MCF 10A (cell line): ENCODE measurements at regions of chr2 and their contacts with region 1.

Region 1: DNA sequence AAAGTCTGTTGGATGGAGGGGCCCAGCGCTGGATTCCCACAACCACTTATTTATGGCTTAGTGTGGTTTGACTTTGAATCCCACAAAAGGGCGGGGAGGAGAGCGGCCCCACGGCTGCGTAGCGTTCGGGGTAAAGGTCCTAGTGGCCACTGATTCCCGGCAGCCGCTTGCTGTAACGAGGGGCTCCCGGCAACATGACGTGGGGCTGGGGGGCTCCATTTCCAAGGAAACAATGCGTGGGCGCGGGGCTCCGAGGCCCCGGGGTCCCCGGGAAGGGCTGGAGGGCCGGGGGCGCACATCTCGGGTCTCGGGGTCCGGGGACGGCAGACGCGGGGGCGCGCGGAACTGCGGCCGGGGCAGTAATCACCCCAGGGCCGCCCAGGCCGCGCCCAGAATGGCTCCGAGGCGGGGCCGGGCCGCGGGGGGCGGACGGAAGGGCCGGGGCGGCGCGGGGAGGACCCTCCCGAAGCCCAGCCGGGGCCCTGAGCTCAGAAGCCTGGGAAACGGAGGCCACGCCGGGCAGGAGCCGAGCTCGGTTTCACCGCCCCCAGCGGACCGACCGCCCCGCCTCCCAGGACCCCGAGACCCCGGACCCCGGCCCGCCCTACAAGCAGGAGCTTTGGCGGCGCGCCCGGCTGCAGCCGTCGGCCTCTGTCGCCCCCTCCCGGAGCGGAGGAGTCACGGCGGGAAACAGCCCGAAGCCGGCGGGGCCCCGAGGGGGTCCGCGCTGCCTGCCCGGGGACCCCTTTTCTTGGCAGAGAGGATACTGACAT is 11.9 kb upstream of the MLPH start:
- DNase-seq: peak; percentile 65
- H3K4me3 Mint-ChIP-seq: peak overlapping the region; percentile 79
- H3K27ac Mint-ChIP-seq: peak overlapping the region; percentile 94
- H3K4me1 Mint-ChIP-seq: peaks cover 9% of the 10 kb centered on the region
- H3K27me3 Mint-ChIP-seq: no peaks in the 10 kb centered on the region
- CTCF ChIP-seq: peak; percentile 92

Region 2: DNA sequence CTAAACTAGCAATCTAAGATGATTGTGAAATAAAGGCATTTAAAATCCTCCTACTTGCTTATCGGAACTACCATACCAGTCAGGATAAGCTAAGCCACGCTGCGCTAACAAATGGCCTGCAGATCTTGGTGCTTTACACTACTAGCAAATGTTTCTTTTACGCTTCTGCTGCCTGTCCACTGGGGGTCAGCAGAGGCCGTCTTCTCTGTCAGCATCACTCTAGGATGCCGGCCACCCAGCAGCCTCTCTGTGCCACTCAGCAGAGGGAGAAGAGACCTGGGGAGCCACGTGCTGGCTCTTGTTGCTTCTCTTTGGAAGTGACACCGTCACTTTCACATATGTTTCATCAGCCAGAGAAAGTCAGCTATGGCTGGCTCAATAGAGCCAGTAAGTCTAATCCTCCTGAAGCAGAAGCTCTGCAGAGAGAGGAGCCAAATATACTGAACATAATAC is 352.9 kb before region 1 on chr2:
- CTCF ChIA-PET with region 1: interaction called, 13 read pairs
- POLR2A ChIA-PET with region 1: interaction called, 4 read pairs
- intact Hi-C with region 1: no loop called
- DNase-seq: peak; percentile 82
- H3K4me3 Mint-ChIP-seq: no peak overlapping the region
- H3K27ac Mint-ChIP-seq: peak overlapping the region; percentile 82
- H3K4me1 Mint-ChIP-seq: peaks cover 25% of the 10 kb centered on the region
- H3K27me3 Mint-ChIP-seq: no peaks in the 10 kb centered on the region
- CTCF ChIP-seq: peak; percentile 80

Region 3: GRCh38 chr2:237171396-237171795 is 303.7 kb before region 1 on chr2:
- CTCF ChIA-PET with region 1: interaction called, 3 read pairs
- POLR2A ChIA-PET with region 1: no interaction called
- intact Hi-C with region 1: loop called (anchors 1 kb)
- DNase-seq: peak; percentile 88
- H3K4me3 Mint-ChIP-seq: no peak overlapping the region
- H3K27ac Mint-ChIP-seq: peak overlapping the region; percentile 84
- H3K4me1 Mint-ChIP-seq: peaks cover 14% of the 10 kb centered on the region
- H3K27me3 Mint-ChIP-seq: no peaks in the 10 kb centered on the region
- CTCF ChIP-seq: peak; percentile 38

Region 4: DNA sequence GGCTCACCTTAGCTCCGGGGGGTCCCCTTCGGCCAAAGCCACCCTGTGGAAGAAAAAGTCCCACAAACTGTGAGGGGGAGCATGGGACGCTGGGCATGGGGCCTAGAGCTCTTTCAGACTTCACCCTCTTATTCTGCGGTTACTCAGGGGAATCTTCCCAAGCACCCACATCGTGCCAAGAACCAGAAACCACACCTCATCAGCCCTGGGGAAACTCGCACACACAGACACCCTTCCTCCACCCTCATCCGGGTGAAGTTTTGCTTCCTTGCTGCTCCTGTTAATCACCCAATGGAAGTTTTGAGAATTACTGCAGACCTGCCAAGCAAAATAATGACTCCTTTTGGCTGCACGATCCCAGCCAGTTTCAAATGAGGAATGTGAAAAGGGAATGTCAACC is 120.2 kb before region 1 on chr2:
- CTCF ChIA-PET with region 1: no interaction called
- POLR2A ChIA-PET with region 1: no interaction called
- intact Hi-C with region 1: no loop called
- DNase-seq: peak; percentile 97
- H3K4me3 Mint-ChIP-seq: peak overlapping the region; percentile 17
- H3K27ac Mint-ChIP-seq: peak overlapping the region; percentile 74
- H3K4me1 Mint-ChIP-seq: peaks cover 18% of the 10 kb centered on the region
- H3K27me3 Mint-ChIP-seq: peaks cover 9% of the 10 kb centered on the region
- CTCF ChIP-seq: peak; percentile 16

Region 5: GRCh38 chr2:237421542-237422116 is 53.5 kb before region 1 on chr2:
- CTCF ChIA-PET with region 1: interaction called, 21 read pairs
- POLR2A ChIA-PET with region 1: interaction called, 7 read pairs
- intact Hi-C with region 1: loop called (anchors 1 kb)
- DNase-seq: peak; percentile 84
- H3K4me3 Mint-ChIP-seq: peak overlapping the region; percentile 35
- H3K27ac Mint-ChIP-seq: peak overlapping the region; percentile 13
- H3K4me1 Mint-ChIP-seq: peaks cover 19% of the 10 kb centered on the region
- H3K27me3 Mint-ChIP-seq: no peaks in the 10 kb centered on the region
- CTCF ChIP-seq: peak; percentile 76

Region 6: GRCh38 chr2:237488901-237489801 is 14.0 kb after region 1 on chr2:
- CTCF ChIA-PET with region 1: interaction called, 12 read pairs
- POLR2A ChIA-PET with region 1: no interaction called
- intact Hi-C with region 1: no loop called
- DNase-seq: peak; percentile 77
- H3K4me3 Mint-ChIP-seq: peak overlapping the region; percentile 29
- H3K27ac Mint-ChIP-seq: peak overlapping the region; percentile 90
- H3K4me1 Mint-ChIP-seq: peaks cover 19% of the 10 kb centered on the region
- H3K27me3 Mint-ChIP-seq: no peaks in the 10 kb centered on the region
- CTCF ChIP-seq: no peak

Region 7: GRCh38 chr2:237547841-237548416 is 72.8 kb after region 1 on chr2:
- CTCF ChIA-PET with region 1: no interaction called
- POLR2A ChIA-PET with region 1: no interaction called
- intact Hi-C with region 1: no loop called
- DNase-seq: no peak
- H3K4me3 Mint-ChIP-seq: no peak overlapping the region
- H3K27ac Mint-ChIP-seq: no peak overlapping the region
- H3K4me1 Mint-ChIP-seq: no peaks in the 10 kb centered on the region
- H3K27me3 Mint-ChIP-seq: no peaks in the 10 kb centered on the region
- CTCF ChIP-seq: no peak

Region 8: DNA sequence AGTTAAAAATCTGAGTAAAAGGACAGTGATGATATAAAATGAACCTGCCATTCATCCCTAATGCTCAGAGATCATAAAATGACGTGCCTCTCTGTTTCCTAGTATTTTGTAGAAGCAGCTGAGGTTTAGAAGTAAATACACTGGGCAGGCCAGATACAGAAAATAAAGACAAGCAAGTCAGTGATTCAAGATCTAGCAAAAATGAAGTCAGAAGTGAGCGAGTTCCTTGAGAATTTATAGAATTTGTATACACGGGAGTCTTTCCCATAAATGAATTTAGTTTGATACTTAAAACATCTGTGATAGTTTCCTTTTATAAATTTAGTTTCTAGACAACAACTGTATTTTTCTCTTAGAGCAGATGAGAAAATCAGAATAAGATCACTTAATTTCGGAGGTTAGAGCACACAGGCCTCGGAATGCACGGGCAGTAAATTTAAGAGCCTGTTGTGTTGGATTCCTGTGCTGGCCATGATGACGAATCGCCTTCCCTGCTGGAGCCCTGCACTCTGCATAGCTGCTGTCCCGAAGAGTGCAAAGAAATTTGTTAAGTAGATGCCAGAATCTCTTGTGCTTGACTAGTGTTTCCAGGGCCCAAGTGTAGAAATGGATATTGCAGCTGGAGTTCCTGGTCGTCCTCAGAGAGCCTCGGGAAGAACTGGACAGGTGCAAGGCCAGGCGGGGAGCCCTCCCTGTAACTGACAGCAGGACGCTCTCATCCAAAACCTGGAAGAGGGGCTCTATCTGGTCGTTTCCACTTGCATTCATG is 239.8 kb after region 1 on chr2:
- CTCF ChIA-PET with region 1: no interaction called
- POLR2A ChIA-PET with region 1: no interaction called
- intact Hi-C with region 1: no loop called
- DNase-seq: no peak
- H3K4me3 Mint-ChIP-seq: no peak overlapping the region
- H3K27ac Mint-ChIP-seq: no peak overlapping the region
- H3K4me1 Mint-ChIP-seq: peaks cover 5% of the 10 kb centered on the region
- H3K27me3 Mint-ChIP-seq: no peaks in the 10 kb centered on the region
- CTCF ChIP-seq: no peak

Region 9: DNA sequence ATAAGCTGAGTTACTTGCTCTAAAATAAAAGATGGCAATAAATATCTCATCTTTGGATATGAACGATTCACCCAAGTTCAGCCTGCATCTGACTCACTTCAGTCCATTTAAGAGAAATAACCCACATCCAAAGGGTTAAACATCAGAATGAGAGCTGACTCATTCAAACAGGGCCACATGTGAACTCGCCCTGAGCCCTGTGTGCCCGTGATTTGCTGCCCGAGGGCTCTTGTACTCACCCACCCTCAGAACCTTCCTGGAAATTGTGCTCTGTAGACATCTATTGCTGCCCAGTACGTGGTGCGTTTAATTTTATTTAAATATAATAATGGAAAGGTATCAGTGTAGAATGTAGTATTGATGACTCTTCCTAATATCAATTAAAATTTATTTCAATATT is 256.5 kb after region 1 on chr2:
- CTCF ChIA-PET with region 1: no interaction called
- POLR2A ChIA-PET with region 1: no interaction called
- intact Hi-C with region 1: no loop called
- DNase-seq: peak; percentile 86
- H3K4me3 Mint-ChIP-seq: peak overlapping the region; percentile 45
- H3K27ac Mint-ChIP-seq: peak overlapping the region; percentile 62
- H3K4me1 Mint-ChIP-seq: peaks cover 34% of the 10 kb centered on the region
- H3K27me3 Mint-ChIP-seq: no peaks in the 10 kb centered on the region
- CTCF ChIP-seq: no peak